Posterior cingulate gyrus (tissue), 11 donors: ENCODE measurements at regions of chr19 and their contacts with region 1.

Region 1: GRCh38 chr19:33406521-33407139 is 33.1 kb downstream of the CEBPG start:
- DNase-seq: peak; percentile 50 to 96 (median 80)

Region 2: GRCh38 chr19:33143897-33144405 is 262.7 kb before region 1 on chr19:
- intact Hi-C with region 1: loop called (anchors 10 kb)
- DNase-seq: peak in 9 of 10 donors; percentile 40 to 94 (median 65)

Region 3: GRCh38 chr19:33241530-33242101 is 165.0 kb before region 1 on chr19:
- intact Hi-C with region 1: loop called (anchors 2 kb)
- DNase-seq: peak in 3 of 10 donors; percentile 31 to 79 (median 70)

Region 4: GRCh38 chr19:33302175-33302973 is 104.3 kb before region 1 on chr19 and contains the start of gene CEBPA:
- intact Hi-C with region 1: loop called (anchors 10 kb)
- DNase-seq: peak in 9 of 10 donors; percentile 51 to 96 (median 73)